A673 (cell line): ENCODE measurements at regions of chr6 and their contacts with region 1.

Region 1: DNA sequence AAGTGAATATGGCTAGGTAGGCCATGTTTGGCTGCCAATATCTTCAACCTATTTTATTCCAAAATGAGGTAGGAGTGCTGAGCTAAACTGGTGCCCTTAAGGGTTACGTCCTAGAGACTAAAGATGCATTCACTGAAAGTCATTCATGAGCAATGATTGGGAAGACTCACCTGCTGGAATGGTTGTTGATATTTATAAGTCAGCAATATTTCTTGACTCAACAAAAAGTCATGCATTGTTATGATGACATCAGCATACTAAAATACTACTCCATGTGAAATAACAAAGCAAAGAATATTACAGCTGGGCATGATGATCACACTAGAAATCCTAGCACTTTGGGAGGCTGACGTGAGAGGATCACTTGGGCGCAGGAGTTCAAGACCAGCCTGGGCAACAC is 17.6 kb upstream of the NUP153 start:
- DNase-seq: no peak
- H3K4me3 ChIP-seq: no peak overlapping the region
- H3K27ac ChIP-seq: no peak overlapping the region
- H3K4me1 ChIP-seq: peaks cover 12% of the 10 kb centered on the region
- H3K27me3 ChIP-seq: no peaks in the 10 kb centered on the region
- CTCF ChIP-seq: no peak

Region 2: DNA sequence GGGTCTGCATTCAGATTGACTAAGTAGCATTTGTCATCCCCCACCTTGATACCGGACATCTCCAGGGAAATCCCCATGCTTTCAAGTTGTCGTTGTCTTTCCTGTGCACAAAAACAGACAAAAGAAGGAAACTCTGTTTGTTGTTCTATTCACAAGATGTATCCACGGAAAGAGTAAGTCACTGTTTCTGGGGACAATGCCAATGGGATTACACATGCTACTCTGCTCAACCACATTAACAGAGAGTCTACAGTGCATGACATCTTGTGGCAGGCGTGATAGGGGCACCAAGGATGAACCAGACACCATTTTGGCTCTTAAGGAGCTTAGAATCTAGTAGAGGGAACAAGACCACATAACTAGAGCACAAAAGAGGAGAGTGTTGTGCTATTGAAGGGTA is 106.8 kb after region 1 on chr6:
- CTCF ChIA-PET with region 1: no interaction called
- POLR2A ChIA-PET with region 1: interaction called, 14 read pairs
- intact Hi-C with region 1: no loop called
- DNase-seq: no peak
- H3K4me3 ChIP-seq: no peak overlapping the region
- H3K27ac ChIP-seq: no peak overlapping the region
- H3K4me1 ChIP-seq: no peaks in the 10 kb centered on the region
- H3K27me3 ChIP-seq: no peaks in the 10 kb centered on the region
- CTCF ChIP-seq: no peak

Region 3: GRCh38 chr6:18503593-18504231 is 779.4 kb after region 1 on chr6:
- CTCF ChIA-PET with region 1: no interaction called
- POLR2A ChIA-PET with region 1: no interaction called
- intact Hi-C with region 1: no loop called
- DNase-seq: peak; percentile 88
- H3K4me3 ChIP-seq: no peak overlapping the region
- H3K27ac ChIP-seq: no peak overlapping the region
- H3K4me1 ChIP-seq: peaks cover 30% of the 10 kb centered on the region
- H3K27me3 ChIP-seq: no peaks in the 10 kb centered on the region
- CTCF ChIP-seq: peak; percentile 92